Left lung (tissue), 14 donors: ENCODE measurements at regions of chr5 and their contacts with region 1.

Region 1: DNA sequence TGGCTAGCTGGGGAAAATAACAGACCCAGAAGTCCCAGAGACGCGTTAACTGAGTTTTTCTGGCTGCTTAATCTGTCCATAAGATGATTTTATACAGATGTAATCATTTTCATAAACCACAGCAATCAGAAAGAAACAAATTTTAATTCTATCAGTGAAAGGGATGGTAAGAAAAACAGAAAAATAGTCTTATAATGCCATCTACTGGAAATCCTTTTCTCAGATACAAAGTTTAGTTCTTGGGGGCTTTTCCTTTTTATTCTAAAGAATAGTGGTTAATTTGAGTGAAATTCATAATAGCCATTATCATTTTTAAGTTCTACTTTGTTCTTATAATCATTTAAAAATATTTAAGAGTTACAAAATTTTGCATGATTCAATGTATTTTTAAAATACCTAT is 44.4 kb downstream of the DROSHA start:
- DNase-seq: no peak
- ATAC-seq: no peak
- H3K4me3 ChIP-seq: no peak overlapping the region
- H3K27ac ChIP-seq: no peak overlapping the region
- H3K4me1 ChIP-seq: no peaks in the 10 kb centered on the region
- H3K27me3 ChIP-seq: no peaks in the 10 kb centered on the region
- CTCF ChIP-seq: no peak

Region 2: DNA sequence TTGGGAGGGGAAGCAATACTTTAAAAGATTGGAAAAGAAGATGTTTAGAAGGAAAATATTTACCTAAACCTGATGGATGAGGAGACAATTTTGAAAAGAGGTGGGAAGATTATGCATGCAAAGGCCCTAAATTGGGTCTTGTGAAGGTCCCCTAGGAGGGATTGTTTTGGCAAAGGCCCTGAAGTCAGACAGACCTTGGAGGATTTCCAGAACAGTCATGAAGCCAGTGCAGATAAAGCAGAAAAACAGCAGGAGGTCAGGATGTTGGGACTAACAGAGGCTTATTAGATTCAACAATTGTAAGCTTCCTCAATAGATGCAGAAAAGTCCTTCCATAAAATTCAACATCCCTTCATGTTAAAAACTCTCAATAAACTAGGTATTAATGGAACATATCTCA is 655.0 kb before region 1 on chr5:
- intact Hi-C with region 1: loop called in 1 of 2 experiments (anchors 10 kb)
- DNase-seq: no peak
- ATAC-seq: no peak
- H3K4me3 ChIP-seq: no peak overlapping the region
- H3K27ac ChIP-seq: no peak overlapping the region
- H3K4me1 ChIP-seq: no peaks in the 10 kb centered on the region
- H3K27me3 ChIP-seq: no peaks in the 10 kb centered on the region
- CTCF ChIP-seq: no peak

Region 3: DNA sequence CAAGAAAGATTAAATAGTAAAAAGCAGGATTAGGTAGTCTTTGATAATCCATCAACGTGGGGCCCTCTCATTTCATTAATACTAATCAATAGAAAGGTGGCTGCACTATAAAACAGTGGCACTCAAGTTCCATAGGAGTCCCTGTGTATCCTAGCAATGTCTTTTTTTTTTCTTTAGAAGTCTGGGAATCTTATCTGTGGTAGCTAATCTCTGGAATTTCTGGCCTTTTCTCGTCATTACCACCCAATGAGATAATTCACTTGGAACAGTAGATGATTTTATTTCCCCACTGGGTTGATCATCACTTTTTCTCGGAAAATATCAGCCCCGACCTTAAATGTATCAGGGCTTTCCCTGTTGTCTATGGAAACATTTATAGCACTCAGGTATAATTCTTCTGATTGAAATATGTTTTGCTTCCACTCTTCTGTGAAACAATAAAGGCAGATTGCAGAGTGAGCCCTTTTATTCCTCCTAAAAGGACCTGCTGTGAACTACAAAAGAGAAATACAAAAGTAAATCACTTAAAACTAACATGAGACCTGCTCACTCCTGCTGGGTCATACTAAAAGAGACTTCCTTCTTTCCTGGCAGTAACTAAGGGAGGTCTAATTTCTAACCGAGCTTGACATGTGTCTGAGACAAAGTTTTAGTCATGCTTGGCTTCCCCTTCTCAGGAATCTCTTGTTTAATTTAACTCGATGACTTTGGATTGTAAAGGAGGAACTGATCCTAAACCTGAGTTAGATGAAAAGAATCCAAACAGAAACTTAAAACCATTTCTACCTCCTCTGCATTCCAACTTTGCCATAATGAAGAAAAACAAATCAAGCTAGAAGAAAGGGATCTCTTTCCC is 380.6 kb before region 1 on chr5:
- intact Hi-C with region 1: no loop called
- DNase-seq: no peak
- ATAC-seq: peak; percentile 25
- H3K4me3 ChIP-seq: no peak overlapping the region
- H3K27ac ChIP-seq: no peak overlapping the region
- H3K4me1 ChIP-seq: peaks cover 0 to 4% of the 10 kb centered on the region in 2 donors
- H3K27me3 ChIP-seq: no peaks in the 10 kb centered on the region
- CTCF ChIP-seq: no peak

Region 4: DNA sequence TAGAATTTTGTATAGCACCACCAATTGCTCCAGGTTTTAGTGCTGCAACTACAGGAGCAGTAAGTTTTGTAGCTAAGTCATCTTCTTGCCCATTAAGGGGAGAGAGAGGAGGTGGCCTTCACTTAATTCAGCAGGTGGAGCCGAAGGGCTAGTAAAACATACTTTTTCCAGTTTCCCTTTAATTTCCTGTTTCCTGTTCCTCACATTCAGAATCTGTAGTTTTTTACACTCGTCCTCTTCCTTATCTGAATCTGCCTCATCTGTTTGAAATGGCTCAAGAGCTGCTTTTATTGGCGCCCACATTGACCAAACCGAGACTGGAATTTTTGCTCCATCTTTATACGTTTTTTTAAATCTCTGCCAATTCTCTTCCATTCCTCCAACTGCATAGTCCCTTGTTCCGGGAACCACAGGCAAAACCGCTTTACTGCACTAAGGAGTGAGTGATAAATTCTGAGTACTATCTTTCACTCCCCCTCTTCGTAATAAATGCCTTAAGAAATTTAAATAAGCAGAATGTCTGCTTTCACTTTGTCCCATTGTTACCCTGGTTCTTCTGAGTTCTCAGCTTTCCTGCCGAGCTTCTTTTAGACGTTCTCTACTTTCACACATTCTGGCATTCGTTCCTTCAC is 89.5 kb before region 1 on chr5:
- intact Hi-C with region 1: no loop called
- DNase-seq: no peak
- ATAC-seq: no peak
- H3K4me3 ChIP-seq: no peak overlapping the region
- H3K27ac ChIP-seq: no peak overlapping the region
- H3K4me1 ChIP-seq: no peaks in the 10 kb centered on the region
- H3K27me3 ChIP-seq: no peaks in the 10 kb centered on the region
- CTCF ChIP-seq: no peak

Region 5: DNA sequence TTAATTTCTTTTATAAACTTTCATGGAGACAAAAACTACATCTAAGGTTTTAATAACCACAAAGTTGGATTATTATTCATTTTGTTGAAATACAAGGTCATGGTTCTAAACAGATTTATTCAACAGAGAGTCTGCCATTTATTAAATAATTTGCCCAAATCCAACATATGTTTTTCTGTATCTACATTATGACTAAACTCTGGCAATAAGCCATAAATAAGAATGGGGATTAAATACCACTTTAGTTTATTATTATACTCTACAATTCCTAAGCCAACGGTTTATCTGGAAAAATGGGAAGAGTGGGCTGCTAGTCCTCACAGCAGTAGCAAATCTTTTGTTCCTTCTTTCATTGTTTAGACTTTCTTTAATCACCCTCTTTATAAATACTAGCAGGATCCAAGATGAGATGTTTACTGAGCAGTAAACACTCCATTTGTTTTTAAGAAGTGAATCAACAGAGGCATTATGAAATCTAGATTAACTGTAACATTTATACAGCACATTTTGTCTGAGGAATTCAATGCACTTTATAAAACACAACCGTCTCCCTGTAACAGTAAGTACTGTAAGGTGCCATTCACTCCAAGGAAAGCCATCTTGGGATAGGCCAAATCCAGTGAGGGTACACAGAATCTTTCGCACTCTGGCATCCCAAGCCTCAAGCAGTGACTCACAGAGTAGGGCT is 45.3 kb before region 1 on chr5:
- intact Hi-C with region 1: no loop called
- DNase-seq: peak in 2 of 4 donors; percentile 59 to 69
- ATAC-seq: no peak
- H3K4me3 ChIP-seq: no peak overlapping the region
- H3K27ac ChIP-seq: no peak overlapping the region
- H3K4me1 ChIP-seq: no peaks in the 10 kb centered on the region
- H3K27me3 ChIP-seq: no peaks in the 10 kb centered on the region
- CTCF ChIP-seq: no peak